Esophagus squamous epithelium (tissue), 5 donors: ENCODE measurements at regions of chr1 and their contacts with region 1.

Region 1: DNA sequence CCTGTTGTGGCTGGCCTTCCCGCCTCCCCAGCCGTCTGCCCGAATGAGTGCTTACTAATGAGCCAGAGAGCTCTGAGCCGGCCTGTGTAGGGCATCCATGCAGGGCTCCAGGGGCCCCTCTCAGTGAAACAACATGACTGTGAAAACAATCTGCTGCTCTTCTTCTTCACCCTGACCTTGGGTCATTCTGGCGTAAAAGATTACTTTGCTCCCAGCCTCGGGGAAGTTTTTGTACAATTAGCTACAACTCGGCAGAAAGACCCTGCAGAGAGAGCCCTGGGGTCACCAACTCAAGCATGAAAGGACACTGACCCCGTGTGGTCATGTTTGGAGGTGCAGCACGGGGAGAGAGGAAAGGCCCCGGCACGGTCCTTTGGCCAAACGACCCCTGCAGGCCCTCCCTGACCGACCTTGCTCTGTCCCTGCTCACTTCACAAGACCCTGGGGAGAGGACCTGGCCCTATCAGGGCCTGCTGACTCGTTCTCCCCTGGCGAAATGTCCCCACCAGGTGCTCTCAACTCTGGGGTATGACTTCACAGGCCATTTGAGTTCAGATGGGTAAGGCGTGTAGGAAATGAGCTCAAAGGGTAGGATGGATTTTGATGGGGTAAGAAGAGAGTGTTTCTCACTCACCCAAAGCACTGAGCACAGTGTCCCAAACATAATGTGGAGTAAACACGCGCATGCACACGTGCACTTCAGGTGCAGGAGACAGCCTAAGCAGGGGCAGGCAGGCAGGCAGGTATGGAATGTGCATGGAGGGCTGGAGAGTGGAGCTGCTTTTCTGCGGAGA is 22.9 kb upstream of the FAM20B start:
- DNase-seq: no peak
- H3K4me3 ChIP-seq: peak overlapping the region in 1 of 4 donors; percentile 19
- H3K27ac ChIP-seq: peak overlapping the region in 1 of 4 donors; percentile 13
- H3K4me1 ChIP-seq: peaks cover 0 to 8% (median 7%) of the 10 kb centered on the region in 3 donors
- H3K27me3 ChIP-seq: no peaks in the 10 kb centered on the region
- CTCF ChIP-seq: peak; percentile 89 to 96 (median 92)
- POLR2A ChIP-seq: peak in 1 of 4 donors; percentile 19

Region 2: DNA sequence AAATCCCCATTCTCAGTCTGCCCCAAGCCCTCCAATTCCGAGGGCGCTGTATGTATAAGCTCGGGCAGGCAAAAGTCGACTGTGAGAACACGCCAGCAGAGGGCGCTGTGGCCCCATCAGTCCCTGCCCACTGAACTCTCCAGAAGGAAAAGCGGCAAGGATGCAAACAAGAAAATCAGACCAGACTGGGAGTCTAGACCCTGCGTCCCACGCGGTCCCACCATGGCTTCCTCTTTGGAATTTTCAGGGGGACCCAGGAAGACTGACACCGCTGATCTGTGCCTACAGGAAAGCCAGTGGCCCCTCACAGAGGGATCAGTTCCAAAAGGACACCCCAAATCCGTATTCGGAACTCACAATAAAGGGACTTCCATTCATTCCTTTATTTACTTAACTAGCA is 470.4 kb before region 1 on chr1:
- intact Hi-C with region 1: loop called (anchors 5 kb)
- DNase-seq: peak; percentile 28
- H3K4me3 ChIP-seq: peak overlapping the region in 1 of 4 donors; percentile 34
- H3K27ac ChIP-seq: no peak overlapping the region
- H3K4me1 ChIP-seq: peaks cover 12 to 33% (median 17%) of the 10 kb centered on the region in 3 donors
- H3K27me3 ChIP-seq: no peaks in the 10 kb centered on the region
- CTCF ChIP-seq: peak; percentile 84 to 95 (median 91)
- POLR2A ChIP-seq: no peak

Region 3: GRCh38 chr1:178774263-178774662 is 228.5 kb before region 1 on chr1:
- intact Hi-C with region 1: loop called (anchors 5 kb)
- DNase-seq: no peak
- H3K4me3 ChIP-seq: no peak overlapping the region
- H3K27ac ChIP-seq: no peak overlapping the region
- H3K4me1 ChIP-seq: no peaks in the 10 kb centered on the region
- H3K27me3 ChIP-seq: no peaks in the 10 kb centered on the region
- CTCF ChIP-seq: peak in 4 of 6 experiments; percentile 15 to 46 (median 34)
- POLR2A ChIP-seq: no peak

Region 4: DNA sequence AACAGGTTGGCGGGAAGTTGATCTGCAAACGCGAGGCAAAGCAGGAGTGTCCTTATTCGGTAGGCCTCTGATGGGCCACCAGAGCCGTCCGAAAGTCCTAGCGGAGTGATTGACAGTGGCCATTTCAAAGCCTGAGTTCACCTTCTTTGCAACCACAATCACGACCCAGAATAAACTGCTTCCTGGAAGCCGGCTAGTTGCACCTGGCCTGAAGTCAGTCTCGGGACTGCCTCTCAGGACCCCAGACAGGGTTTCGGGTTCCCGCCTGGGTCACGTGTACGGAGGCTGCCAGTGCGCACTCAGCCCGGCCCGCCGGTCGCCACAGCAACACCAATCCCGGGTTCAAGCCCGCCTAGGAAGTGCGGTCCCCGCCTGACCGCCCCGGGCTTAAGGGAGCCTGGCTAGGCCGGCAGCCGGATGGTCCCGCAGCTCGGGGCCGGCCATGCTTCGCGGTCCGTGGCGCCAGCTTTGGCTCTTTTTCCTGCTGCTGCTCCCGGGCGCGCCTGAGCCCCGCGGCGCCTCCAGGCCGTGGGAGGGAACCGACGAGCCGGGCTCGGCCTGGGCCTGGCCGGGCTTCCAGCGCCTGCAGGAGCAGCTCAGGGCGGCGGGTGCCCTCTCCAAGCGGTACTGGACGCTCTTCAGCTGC is 79.1 kb after region 1 on chr1 and contains the start of gene TOR3A:
- intact Hi-C with region 1: no loop called
- DNase-seq: peak; percentile 60
- H3K4me3 ChIP-seq: peak within 1 kb of the TSS; percentile 79 to 94 (median 84)
- H3K27ac ChIP-seq: peak within 1 kb of the TSS; percentile 88 to 92 (median 88)
- H3K4me1 ChIP-seq: peaks cover 3 to 45% (median 8%) of the 10 kb centered on the region in 3 donors
- H3K27me3 ChIP-seq: no peaks in the 10 kb centered on the region
- CTCF ChIP-seq: no peak
- POLR2A ChIP-seq: peak in 2 of 4 donors; percentile 67 to 90
- total RNA-seq, gene TOR3A: 31.9 to 48.8 (median 34.4) TPM